Mammary epithelial cell (primary cell): ENCODE measurements at regions of chr1 and their contacts with region 1.

Region 1: DNA sequence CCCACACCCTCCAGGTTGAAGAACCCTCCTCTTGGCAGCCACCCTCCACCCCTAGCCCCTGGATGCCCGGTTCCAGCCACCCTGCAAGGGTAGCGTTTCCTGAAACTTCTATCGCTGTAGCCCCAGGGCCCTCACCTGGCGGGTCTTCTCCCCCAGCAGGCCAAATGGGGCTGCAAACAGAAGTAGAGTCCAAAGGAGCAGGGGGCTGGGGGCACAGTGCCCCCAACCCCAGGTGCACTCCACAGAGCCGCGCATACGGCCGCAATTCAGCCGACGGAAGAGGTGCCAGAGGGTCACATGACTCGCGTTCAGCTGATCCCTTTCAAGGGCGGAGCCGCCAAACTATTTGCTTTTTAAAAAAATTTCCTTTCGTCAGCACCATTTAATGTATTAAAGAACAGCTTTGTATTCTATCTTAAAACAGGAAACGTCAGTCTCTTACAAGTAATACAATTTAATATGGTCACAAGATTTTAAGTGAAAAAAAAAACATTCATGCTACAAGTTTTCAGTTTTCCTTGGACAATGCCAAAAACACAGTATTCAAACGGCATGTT is at the start of gene GLMP:
- DNase-seq: peak; percentile 36
- H3K4me3 ChIP-seq: peak within 1 kb of the TSS; percentile 50 to 89 (median 53)
- H3K27ac ChIP-seq: no peak within 1 kb of the TSS
- H3K4me1 ChIP-seq: peaks cover 16% of the 10 kb centered on the region
- H3K27me3 ChIP-seq: no peaks in the 10 kb centered on the region
- CTCF ChIP-seq: no peak
- total RNA-seq, gene GLMP: 29.7 to 32.1 TPM

Region 2: GRCh38 chr1:155961937-155962336 is 333.5 kb before region 1 on chr1:
- CTCF ChIA-PET with region 1: no interaction called
- dilution Hi-C with region 1: no loop called
- in situ Hi-C with region 1: no loop called
- intact Hi-C with region 1: no loop called
- DNase-seq: peak; percentile 100
- H3K4me3 ChIP-seq: no peak overlapping the region
- H3K27ac ChIP-seq: peak overlapping the region; percentile 96
- H3K4me1 ChIP-seq: peaks cover 34% of the 10 kb centered on the region
- H3K27me3 ChIP-seq: no peaks in the 10 kb centered on the region
- CTCF ChIP-seq: peak; percentile 9 to 47

Region 3: DNA sequence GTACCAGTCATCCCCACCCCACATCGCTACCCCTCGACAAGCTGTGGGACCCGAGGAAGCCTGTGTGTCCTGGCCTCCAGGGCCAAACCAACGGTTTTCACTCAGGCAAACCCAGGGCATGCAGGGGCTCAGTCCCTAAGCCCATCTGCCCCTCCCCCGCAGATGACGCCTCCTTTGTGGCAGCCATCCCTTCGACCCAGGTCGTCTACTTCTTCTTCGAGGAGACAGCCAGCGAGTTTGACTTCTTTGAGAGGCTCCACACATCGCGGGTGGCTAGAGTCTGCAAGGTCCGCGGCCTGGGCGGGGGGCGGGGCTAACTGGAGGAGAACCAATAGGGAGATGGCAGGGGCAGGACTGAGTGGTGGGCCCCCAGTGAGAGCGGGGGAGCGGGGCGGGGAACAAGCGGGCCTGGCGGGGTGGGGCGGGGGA is 134.7 kb before region 1 on chr1:
- CTCF ChIA-PET with region 1: no interaction called
- dilution Hi-C with region 1: loop called (anchors 5 kb)
- in situ Hi-C with region 1: no loop called
- intact Hi-C with region 1: no loop called
- DNase-seq: no peak
- H3K4me3 ChIP-seq: no peak overlapping the region
- H3K27ac ChIP-seq: no peak overlapping the region
- H3K4me1 ChIP-seq: no peaks in the 10 kb centered on the region
- H3K27me3 ChIP-seq: no peaks in the 10 kb centered on the region
- CTCF ChIP-seq: no peak

Region 4: GRCh38 chr1:156262461-156263287 is 32.8 kb before region 1 on chr1:
- CTCF ChIA-PET with region 1: no interaction called
- dilution Hi-C with region 1: loop called (anchors 5 kb)
- in situ Hi-C with region 1: no loop called
- intact Hi-C with region 1: no loop called
- DNase-seq: peak; percentile 91
- H3K4me3 ChIP-seq: no peak overlapping the region
- H3K27ac ChIP-seq: peak overlapping the region; percentile 81
- H3K4me1 ChIP-seq: peaks cover 65% of the 10 kb centered on the region
- H3K27me3 ChIP-seq: no peaks in the 10 kb centered on the region
- CTCF ChIP-seq: no peak